Activated CD4-positive, alpha-beta T cell treated with anti-CD3 and anti-CD28 coated beads for 36 hours (primary cell): ENCODE measurements at regions of chr22 and their contacts with region 1.

Region 1: GRCh38 chr22:26377170-26377830 is 51.8 kb upstream of the ASPHD2 start:
- DNase-seq: peak; percentile 9
- ATAC-seq: no peak
- H3K4me3 Mint-ChIP-seq: no peak overlapping the region
- H3K27ac Mint-ChIP-seq: no peak overlapping the region
- H3K4me1 Mint-ChIP-seq: peaks cover 7% of the 10 kb centered on the region
- H3K27me3 Mint-ChIP-seq: peaks cover 40% of the 10 kb centered on the region

Region 2: GRCh38 chr22:25645266-25645665 is 732.0 kb before region 1 on chr22:
- CTCF ChIA-PET with region 1: no interaction called
- POLR2A ChIA-PET with region 1: no interaction called
- intact Hi-C with region 1: no loop called
- DNase-seq: no peak
- ATAC-seq: no peak
- H3K4me3 Mint-ChIP-seq: no peak overlapping the region
- H3K27ac Mint-ChIP-seq: no peak overlapping the region
- H3K4me1 Mint-ChIP-seq: peaks cover 9% of the 10 kb centered on the region
- H3K27me3 Mint-ChIP-seq: no peaks in the 10 kb centered on the region

Region 3: GRCh38 chr22:26416670-26417250 is 39.5 kb after region 1 on chr22:
- CTCF ChIA-PET with region 1: interaction called, 3 read pairs
- POLR2A ChIA-PET with region 1: no interaction called
- intact Hi-C with region 1: loop called in 1 of 2 experiments (anchors 1 kb)
- DNase-seq: no peak
- ATAC-seq: no peak
- H3K4me3 Mint-ChIP-seq: no peak overlapping the region
- H3K27ac Mint-ChIP-seq: no peak overlapping the region
- H3K4me1 Mint-ChIP-seq: no peaks in the 10 kb centered on the region
- H3K27me3 Mint-ChIP-seq: peaks cover 8% of the 10 kb centered on the region